ENCODE measurements at regions of chr1 and their contacts with region 1.

Region 1: DNA sequence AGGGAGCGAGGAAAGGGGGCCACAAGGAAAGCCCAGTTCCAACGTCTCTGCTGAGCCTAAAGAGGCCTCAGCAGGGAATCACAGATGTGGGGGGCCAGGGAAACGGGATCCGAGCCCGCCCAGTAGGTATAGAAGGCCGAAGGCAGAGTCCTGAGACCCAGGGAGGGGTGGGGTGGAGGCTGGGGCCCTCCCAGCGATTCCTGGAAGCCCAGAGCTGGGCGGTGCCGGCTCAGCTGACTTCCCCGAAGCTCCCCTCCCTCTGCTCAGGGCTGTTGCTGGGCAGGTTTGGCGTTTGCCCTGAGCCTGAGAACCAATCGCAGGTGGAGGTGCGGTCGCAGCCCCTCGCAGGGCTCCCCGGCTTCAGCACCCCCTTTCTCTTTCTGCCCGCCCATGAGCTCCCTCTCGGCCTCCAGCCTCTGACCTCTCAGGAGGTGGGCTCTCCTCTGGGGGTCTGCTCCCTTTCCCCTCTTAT is 12.8 kb downstream of the ADAMTSL4 start:
- DNase-seq: peak; percentile 64 to 88
- ATAC-seq: peak; percentile 37 to 70 (median 38)
- H3K4me3 ChIP-seq: peak overlapping the region; percentile 62
- H3K4me3 Mint-ChIP-seq: peak overlapping the region; percentile 98
- H3K27ac ChIP-seq: peak overlapping the region; percentile 95
- H3K27ac Mint-ChIP-seq: peak overlapping the region; percentile 98 to 99
- H3K4me1 ChIP-seq: peaks cover 80% of the 10 kb centered on the region
- H3K4me1 Mint-ChIP-seq: peaks cover 64 to 75% of the 10 kb centered on the region in 2 donors
- H3K27me3 ChIP-seq: no peaks in the 10 kb centered on the region
- H3K27me3 Mint-ChIP-seq: no peaks in the 10 kb centered on the region
- CTCF ChIP-seq: peak; percentile 10

Region 2: GRCh38 chr1:150235852-150236613 is 326.0 kb before region 1 on chr1 and contains the start of gene ANP32E:
- intact Hi-C with region 1: loop called (anchors 10 kb)
- DNase-seq: peak; percentile 90 to 98
- ATAC-seq: peak; percentile 85 to 96 (median 86)
- H3K4me3 ChIP-seq: peak within 1 kb of the TSS; percentile 97
- H3K4me3 Mint-ChIP-seq: no peak within 1 kb of the TSS
- H3K27ac ChIP-seq: peak within 1 kb of the TSS; percentile 99
- H3K27ac Mint-ChIP-seq: no peak within 1 kb of the TSS
- H3K4me1 ChIP-seq: peaks cover 14% of the 10 kb centered on the region
- H3K4me1 Mint-ChIP-seq: peaks cover 16 to 19% of the 10 kb centered on the region in 2 donors
- H3K27me3 ChIP-seq: no peaks in the 10 kb centered on the region
- H3K27me3 Mint-ChIP-seq: no peaks in the 10 kb centered on the region
- CTCF ChIP-seq: no peak
- total RNA-seq, gene ANP32E: 50.7 to 56.9 (median 55.2) TPM

Region 3: DNA sequence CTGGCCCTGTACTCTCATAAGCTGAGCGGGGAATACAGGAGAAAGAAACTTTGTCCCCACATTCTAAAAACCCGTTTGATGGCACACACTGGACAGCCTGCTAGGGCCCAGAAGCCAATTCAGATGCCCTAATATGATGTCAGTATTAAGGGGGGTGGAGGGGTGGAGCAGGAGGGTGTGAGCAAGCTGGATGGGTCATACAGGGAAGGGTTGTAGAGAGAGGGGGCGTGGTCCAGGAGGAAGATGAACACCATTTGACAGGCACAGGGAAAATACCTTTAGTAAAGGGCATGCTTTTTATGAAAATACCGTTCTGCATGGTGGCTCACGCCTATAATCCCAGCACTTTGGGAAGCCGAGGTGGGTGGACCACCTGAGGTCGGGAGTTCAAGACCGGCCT is 68.8 kb before region 1 on chr1:
- intact Hi-C with region 1: no loop called
- DNase-seq: no peak
- ATAC-seq: no peak
- H3K4me3 ChIP-seq: no peak overlapping the region
- H3K4me3 Mint-ChIP-seq: no peak overlapping the region
- H3K27ac ChIP-seq: no peak overlapping the region
- H3K27ac Mint-ChIP-seq: no peak overlapping the region
- H3K4me1 ChIP-seq: peaks cover 1% of the 10 kb centered on the region
- H3K4me1 Mint-ChIP-seq: peaks cover 10 to 11% of the 10 kb centered on the region in 2 donors
- H3K27me3 ChIP-seq: no peaks in the 10 kb centered on the region
- H3K27me3 Mint-ChIP-seq: no peaks in the 10 kb centered on the region
- CTCF ChIP-seq: no peak

Region 4: GRCh38 chr1:150578965-150579798 is 17.2 kb after region 1 on chr1 and contains the start of gene MCL1:
- intact Hi-C with region 1: loop called (anchors 1 kb)
- DNase-seq: peak; percentile 88 to 93
- ATAC-seq: peak; percentile 80 to 95 (median 83)
- H3K4me3 ChIP-seq: peak within 1 kb of the TSS; percentile 79
- H3K4me3 Mint-ChIP-seq: peak within 1 kb of the TSS; percentile 100
- H3K27ac ChIP-seq: peak within 1 kb of the TSS; percentile 100
- H3K27ac Mint-ChIP-seq: peak within 1 kb of the TSS; percentile 96 to 99
- H3K4me1 ChIP-seq: peaks cover 16% of the 10 kb centered on the region
- H3K4me1 Mint-ChIP-seq: peaks cover 57 to 59% of the 10 kb centered on the region in 2 donors
- H3K27me3 ChIP-seq: no peaks in the 10 kb centered on the region
- H3K27me3 Mint-ChIP-seq: no peaks in the 10 kb centered on the region
- CTCF ChIP-seq: no peak
- total RNA-seq, gene MCL1: 929 to 1,396 (median 938) TPM

Region 5: GRCh38 chr1:150596095-150596892 is 34.3 kb after region 1 on chr1:
- intact Hi-C with region 1: no loop called
- DNase-seq: no peak
- ATAC-seq: no peak
- H3K4me3 ChIP-seq: no peak overlapping the region
- H3K4me3 Mint-ChIP-seq: no peak overlapping the region
- H3K27ac ChIP-seq: no peak overlapping the region
- H3K27ac Mint-ChIP-seq: no peak overlapping the region
- H3K4me1 ChIP-seq: no peaks in the 10 kb centered on the region
- H3K4me1 Mint-ChIP-seq: peaks cover 0 to 6% of the 10 kb centered on the region in 2 donors
- H3K27me3 ChIP-seq: no peaks in the 10 kb centered on the region
- H3K27me3 Mint-ChIP-seq: no peaks in the 10 kb centered on the region
- CTCF ChIP-seq: no peak

Region 6: GRCh38 chr1:150621497-150622302 is 59.7 kb after region 1 on chr1:
- intact Hi-C with region 1: loop called (anchors 1 kb)
- DNase-seq: peak; percentile 39 to 85
- ATAC-seq: peak; percentile 62 to 87 (median 78)
- H3K4me3 ChIP-seq: no peak overlapping the region
- H3K4me3 Mint-ChIP-seq: no peak overlapping the region
- H3K27ac ChIP-seq: peak overlapping the region; percentile 61
- H3K27ac Mint-ChIP-seq: peak overlapping the region; percentile 86 to 89
- H3K4me1 ChIP-seq: peaks cover 4% of the 10 kb centered on the region
- H3K4me1 Mint-ChIP-seq: peaks cover 15 to 26% of the 10 kb centered on the region in 2 donors
- H3K27me3 ChIP-seq: no peaks in the 10 kb centered on the region
- H3K27me3 Mint-ChIP-seq: no peaks in the 10 kb centered on the region
- CTCF ChIP-seq: peak; percentile 71

Region 7: DNA sequence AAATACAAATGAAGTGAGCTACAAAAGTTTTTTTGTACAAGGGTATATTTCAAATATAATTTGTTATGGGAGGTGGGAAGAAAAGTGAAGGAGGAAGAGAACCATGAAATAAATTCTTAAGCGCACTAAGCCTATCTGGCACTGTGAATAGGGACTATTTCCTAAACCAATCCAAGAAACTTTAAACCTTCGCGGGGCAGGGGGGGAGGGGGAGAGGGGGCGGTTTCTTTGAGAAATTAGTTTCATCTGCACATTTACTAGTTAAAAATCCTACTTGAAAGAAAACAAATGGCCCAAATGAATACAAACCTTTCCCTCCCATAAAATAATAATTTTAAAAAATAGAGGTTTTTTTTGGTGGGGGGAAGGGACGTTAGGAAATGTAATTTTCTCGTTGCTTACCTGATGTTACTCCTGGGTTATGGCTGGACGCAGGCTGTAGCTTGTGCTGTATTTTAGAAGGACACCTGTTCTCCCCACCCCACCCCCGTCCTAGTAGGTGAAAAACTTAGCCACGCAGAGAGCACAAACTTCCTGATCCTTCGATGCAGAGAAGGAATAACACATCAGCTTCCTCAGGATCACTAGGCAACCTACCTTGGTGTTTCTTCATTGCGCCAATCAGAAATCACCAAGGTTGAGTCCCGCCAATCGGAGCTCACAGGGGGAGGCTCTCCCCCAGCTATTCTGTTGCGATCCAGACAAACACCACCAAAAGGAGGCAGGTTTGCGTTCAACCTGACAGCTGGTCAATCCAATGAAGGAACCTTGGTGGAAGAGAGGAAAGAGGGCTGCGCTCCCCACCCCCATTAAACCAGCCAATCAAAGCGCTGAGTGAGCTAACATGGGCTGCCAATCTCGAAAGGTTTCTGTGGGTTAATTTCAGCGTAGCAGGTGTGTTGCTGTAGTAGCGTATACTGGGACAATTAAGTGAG is 134.8 kb after region 1 on chr1 and contains the start of gene GOLPH3L:
- intact Hi-C with region 1: loop called (anchors 5 kb)
- DNase-seq: peak; percentile 74 to 96
- ATAC-seq: peak; percentile 98 to 100 (median 99)
- H3K4me3 ChIP-seq: peak within 1 kb of the TSS; percentile 75
- H3K4me3 Mint-ChIP-seq: peak within 1 kb of the TSS; percentile 94
- H3K27ac ChIP-seq: peak within 1 kb of the TSS; percentile 69
- H3K27ac Mint-ChIP-seq: peak within 1 kb of the TSS; percentile 66 to 80
- H3K4me1 ChIP-seq: no peaks in the 10 kb centered on the region
- H3K4me1 Mint-ChIP-seq: peaks cover 13 to 19% of the 10 kb centered on the region in 2 donors
- H3K27me3 ChIP-seq: no peaks in the 10 kb centered on the region
- H3K27me3 Mint-ChIP-seq: peaks cover 0 to 4% of the 10 kb centered on the region in 2 donors
- CTCF ChIP-seq: no peak
- total RNA-seq, gene GOLPH3L: 6.2 to 13.6 (median 10.3) TPM

Region 8: DNA sequence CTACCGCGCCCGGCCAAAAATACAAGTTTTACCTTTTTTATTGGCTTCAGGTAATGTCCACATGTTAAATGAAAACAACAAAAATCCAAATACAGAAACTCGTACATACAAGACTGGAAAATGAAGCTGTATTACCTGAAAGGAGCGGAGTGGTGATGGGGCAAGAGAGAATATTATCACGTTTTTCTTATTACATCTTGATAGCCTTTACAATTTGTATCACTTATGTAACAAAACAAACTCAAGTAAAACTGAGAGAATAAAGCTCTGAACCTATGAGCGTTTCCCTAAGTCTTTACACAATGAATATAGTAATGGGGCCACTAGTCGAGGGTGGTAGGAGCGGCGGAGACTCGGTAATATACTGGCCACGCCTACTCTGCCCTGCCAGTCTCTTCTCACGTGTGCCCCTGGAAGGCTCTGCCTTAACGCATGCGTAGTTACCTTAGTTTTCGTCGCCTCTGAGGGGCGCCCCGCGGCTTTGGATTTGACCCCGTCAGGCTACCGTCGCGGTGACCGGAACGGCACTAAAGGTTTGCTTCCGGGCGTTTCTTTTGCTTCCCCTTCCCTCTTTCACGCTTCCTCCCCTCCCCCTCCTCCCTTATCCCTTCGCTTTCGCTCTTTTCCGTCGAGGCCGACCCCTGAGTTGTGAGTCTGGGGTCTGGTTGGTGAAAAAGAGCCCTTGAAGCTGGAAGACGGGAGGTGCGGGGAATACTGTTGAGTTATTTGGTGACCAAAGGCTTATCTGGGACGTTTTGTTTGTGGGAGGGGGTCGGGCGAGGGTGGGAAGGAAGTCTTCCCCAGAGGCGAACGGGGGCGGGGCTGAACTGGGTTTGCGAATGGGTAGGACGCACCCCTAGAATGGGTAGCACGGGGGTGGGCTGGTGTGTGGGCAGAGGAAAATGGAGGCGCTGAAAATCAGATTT is 364.1 kb after region 1 on chr1 and contains the start of gene SETDB1:
- intact Hi-C with region 1: loop called (anchors 10 kb)
- DNase-seq: peak; percentile 88 to 96
- ATAC-seq: peak; percentile 93 to 99 (median 96)
- H3K4me3 ChIP-seq: peak within 1 kb of the TSS; percentile 85
- H3K4me3 Mint-ChIP-seq: peak within 1 kb of the TSS; percentile 95
- H3K27ac ChIP-seq: peak within 1 kb of the TSS; percentile 76
- H3K27ac Mint-ChIP-seq: peak within 1 kb of the TSS; percentile 95
- H3K4me1 ChIP-seq: peaks cover 16% of the 10 kb centered on the region
- H3K4me1 Mint-ChIP-seq: peaks cover 22 to 27% of the 10 kb centered on the region in 2 donors
- H3K27me3 ChIP-seq: no peaks in the 10 kb centered on the region
- H3K27me3 Mint-ChIP-seq: no peaks in the 10 kb centered on the region
- CTCF ChIP-seq: no peak
- total RNA-seq, gene SETDB1: 64.6 to 74.3 (median 70.5) TPM

Measured in natural killer cell (primary cell).